ENCODE measurements at regions of chr13 and their contacts with region 1.

Region 1: DNA sequence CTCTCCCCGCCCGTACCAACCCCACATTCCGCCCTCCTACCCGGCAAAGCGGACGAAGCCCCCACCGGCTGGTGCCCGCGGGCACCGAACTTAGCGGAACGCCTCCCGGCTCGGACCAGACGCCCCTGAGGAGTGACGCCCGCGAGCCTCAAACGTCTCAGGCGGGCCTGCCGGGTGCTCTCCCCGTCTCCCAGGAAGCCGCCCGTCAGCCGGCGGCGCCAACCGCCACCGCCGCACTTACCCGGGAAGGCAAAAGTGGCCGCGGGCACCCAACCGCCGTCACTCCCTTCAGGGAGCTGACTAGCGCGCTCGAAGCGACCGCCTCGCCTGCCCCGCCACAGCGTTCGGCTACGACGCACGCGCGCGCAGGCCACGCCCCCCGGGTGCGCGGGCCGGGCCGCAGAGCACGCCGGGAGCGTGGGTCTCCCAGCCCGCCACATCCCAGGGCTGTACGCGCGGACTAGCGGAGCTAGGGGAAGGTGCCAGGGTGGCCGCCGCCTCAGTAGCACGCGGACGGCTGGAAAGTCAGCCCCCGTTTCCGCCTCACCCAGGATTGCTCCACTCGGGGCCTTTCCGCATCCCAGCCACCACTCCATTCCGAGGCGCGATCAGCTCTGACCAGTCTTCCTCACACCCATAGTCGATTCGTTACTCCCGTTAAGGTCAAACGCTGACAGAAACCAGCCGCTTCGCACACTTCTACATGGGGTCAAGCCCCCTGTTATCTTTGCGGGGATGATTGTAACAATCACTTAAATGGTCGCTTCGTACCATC is at the start of gene TEX30:
- DNase-seq: peak; percentile 89
- H3K4me3 ChIP-seq: peak within 1 kb of the TSS; percentile 66 to 91 (median 80)
- H3K27ac ChIP-seq: peak within 1 kb of the TSS; percentile 82 to 90 (median 90)
- H3K4me1 ChIP-seq: peaks cover 0 to 18% (median 11%) of the 10 kb centered on the region in 4 donors
- H3K27me3 ChIP-seq: no peaks in the 10 kb centered on the region
- CTCF ChIP-seq: no peak
- EP300 ChIP-seq: no peak
- POLR2A ChIP-seq: peak; percentile 44 to 46
- total RNA-seq, gene TEX30: 8.9 to 17.3 (median 11.7) TPM

Region 2: GRCh38 chr13:102596147-102597028 is 177.2 kb before region 1 on chr13 and contains the start of gene TPP2:
- intact Hi-C with region 1: loop called (anchors 2 kb)
- DNase-seq: peak; percentile 100
- H3K4me3 ChIP-seq: peak within 1 kb of the TSS; percentile 73 to 99 (median 96)
- H3K27ac ChIP-seq: peak within 1 kb of the TSS; percentile 94 to 99 (median 96)
- H3K4me1 ChIP-seq: peaks cover 0 to 58% (median 37%) of the 10 kb centered on the region in 4 donors
- H3K27me3 ChIP-seq: no peaks in the 10 kb centered on the region
- CTCF ChIP-seq: no peak
- EP300 ChIP-seq: no peak
- POLR2A ChIP-seq: peak; percentile 56 to 70
- total RNA-seq, gene TPP2: 33.0 to 54.2 (median 37.3) TPM

Region 3: DNA sequence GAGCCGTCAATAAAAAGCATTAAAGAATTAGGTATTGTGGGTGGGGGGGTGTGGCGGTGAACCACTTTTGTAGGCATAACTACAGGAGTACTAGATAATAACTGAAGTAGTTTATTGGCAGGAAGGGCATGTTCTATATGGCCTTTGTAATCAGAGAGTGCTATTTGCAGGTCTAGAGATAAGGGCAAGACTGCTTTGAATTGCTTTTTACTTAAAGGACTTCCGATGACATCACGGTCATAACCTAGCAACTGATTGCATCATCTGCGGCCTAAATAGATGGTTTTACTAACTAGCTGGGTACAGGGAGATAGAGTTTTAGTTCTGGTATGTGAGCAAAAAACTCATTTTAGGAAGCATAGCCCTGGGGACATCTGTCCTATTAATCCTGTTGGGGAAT is 103.5 kb before region 1 on chr13:
- intact Hi-C with region 1: no loop called
- DNase-seq: no peak
- H3K4me3 ChIP-seq: no peak overlapping the region
- H3K27ac ChIP-seq: no peak overlapping the region
- H3K4me1 ChIP-seq: no peaks in the 10 kb centered on the region
- H3K27me3 ChIP-seq: no peaks in the 10 kb centered on the region
- CTCF ChIP-seq: no peak
- EP300 ChIP-seq: no peak
- POLR2A ChIP-seq: no peak

Region 4: GRCh38 chr13:103044056-103044455 is 270.4 kb after region 1 on chr13:
- intact Hi-C with region 1: no loop called
- DNase-seq: no peak
- H3K4me3 ChIP-seq: no peak overlapping the region
- H3K27ac ChIP-seq: no peak overlapping the region
- H3K4me1 ChIP-seq: no peaks in the 10 kb centered on the region
- H3K27me3 ChIP-seq: no peaks in the 10 kb centered on the region
- CTCF ChIP-seq: no peak
- EP300 ChIP-seq: no peak
- POLR2A ChIP-seq: no peak